Left cardiac atrium (tissue), 4 donors: ENCODE measurements at regions of chr14 and their contacts with region 1.

Region 1: DNA sequence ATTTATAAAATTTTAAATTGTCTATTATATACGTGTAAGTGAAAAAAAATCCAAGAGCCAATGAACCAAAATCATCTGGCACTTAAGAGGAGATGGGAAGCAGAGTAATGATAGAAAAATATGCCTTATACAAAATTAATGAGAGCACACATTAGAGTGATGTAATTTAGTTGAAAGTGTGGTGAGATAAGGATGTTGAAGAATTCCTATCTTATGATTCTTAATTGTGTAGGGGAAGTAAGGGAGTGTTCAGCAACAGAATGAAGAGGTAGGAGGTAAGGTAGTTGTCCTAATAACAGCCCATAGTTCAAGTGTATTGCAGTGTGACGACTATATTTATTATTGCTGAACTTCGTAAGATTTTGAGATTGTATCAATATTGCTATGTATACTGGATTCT is 843.4 kb upstream of the FLRT2 start:
- DNase-seq: no peak
- ATAC-seq: peak in 1 of 2 donors; percentile 72

Region 2: GRCh38 chr14:85024931-85025330 is 338.4 kb after region 1 on chr14:
- intact Hi-C with region 1: loop called in 1 of 2 experiments (anchors 5 kb)
- DNase-seq: no peak
- ATAC-seq: peak; percentile 72 to 77